HAP-1 (cell line): ENCODE measurements at regions of chr4 and their contacts with region 1.

Region 1: GRCh38 chr4:37389967-37390580 is 145.5 kb downstream of the NWD2 start:
- DNase-seq: peak; percentile 36 to 63
- H3K4me3 ChIP-seq: no peak overlapping the region
- H3K4me1 ChIP-seq: no peaks in the 10 kb centered on the region
- H3K27me3 ChIP-seq: no peaks in the 10 kb centered on the region

Region 2: GRCh38 chr4:36351082-36351666 is 1038.9 kb before region 1 on chr4:
- in situ Hi-C with region 1: loop called (anchors 10 kb)
- DNase-seq: peak; percentile 49 to 69
- H3K4me3 ChIP-seq: no peak overlapping the region
- H3K4me1 ChIP-seq: no peaks in the 10 kb centered on the region
- H3K27me3 ChIP-seq: no peaks in the 10 kb centered on the region; the same call in 1 of the 2 replicates